ENCODE measurements at regions of chr1 and their contacts with region 1.

Region 1: DNA sequence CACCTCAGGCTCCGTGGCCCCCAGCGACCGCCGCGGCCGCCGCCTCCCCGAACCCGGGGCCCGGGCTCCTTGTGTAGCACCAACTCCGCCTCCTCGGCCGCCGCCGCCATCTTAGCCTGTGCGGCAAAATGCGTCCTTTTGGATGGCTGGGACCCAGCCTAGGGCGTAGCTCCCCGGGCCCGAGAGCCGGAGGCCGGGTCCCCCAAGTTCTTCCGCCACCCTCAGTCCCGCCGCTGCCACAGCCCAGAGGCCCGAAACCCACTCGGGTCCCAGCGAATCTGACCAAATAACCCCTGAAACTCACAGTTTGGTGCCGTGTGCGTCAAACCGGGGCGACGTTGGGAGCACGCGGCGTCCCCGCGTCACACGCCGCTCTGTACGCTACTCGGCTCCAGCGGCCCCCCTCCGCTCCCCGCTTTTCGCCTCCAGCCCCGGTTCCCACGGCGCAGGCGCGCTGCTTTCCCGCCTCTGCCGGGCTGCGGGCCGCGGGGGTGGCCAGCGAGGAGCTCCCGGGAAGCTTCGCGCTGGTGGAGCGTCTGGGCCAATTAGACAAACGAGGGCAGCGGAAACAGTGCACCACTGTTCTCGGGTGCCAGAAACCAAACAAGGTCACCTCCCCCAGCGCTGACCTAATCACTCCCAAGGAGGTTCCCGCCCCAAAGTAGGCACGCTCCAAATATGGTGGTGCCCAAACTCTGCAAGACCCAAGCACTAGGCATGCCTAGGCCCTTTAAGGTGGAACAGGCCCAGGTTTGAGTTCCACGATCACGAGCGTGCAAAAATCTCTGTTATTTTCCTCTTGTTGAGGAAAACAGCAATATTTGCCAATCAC is at the start of gene ZNF644:
- DNase-seq: peak; percentile 78 to 98
- H3K4me3 ChIP-seq: peak within 1 kb of the TSS; percentile 72 to 84
- H3K27ac ChIP-seq: peak within 1 kb of the TSS; percentile 96 to 100
- H3K4me1 ChIP-seq: peaks cover 4 to 13% of the 10 kb centered on the region in 2 donors
- H3K27me3 ChIP-seq: no peaks in the 10 kb centered on the region
- CTCF ChIP-seq: no peak
- total RNA-seq, gene ZNF644: 17.1 TPM

Region 2: DNA sequence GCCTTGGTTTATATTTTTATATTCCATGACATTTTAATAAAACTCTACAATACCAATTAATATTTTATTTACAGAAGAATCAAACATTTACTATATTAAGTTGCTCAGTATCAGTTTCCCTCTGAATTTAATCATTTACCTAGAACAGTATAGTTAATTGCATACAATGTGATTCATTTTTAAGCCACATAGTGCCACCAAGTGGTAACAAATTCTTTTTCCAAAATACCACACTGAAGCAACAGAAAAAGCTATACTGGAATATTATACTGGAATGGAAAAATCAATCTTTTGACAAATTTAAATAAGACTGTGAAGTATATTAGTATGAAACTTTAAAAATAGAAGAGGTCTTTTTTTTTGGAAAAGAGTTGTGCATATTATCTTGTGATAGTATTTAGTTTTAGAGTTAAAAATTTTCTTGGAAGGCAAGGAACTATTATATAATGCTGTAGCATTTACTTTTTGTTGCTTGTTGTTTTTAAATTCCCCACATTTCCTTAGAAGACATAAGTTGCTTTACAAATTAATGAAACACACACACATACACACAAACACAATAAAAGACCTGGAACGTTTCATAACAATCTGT is 57.4 kb before region 1 on chr1:
- intact Hi-C with region 1: loop called (anchors 2 kb)
- DNase-seq: no peak
- H3K4me3 ChIP-seq: no peak overlapping the region
- H3K27ac ChIP-seq: no peak overlapping the region
- H3K4me1 ChIP-seq: peaks cover 0 to 2% of the 10 kb centered on the region in 2 donors
- H3K27me3 ChIP-seq: no peaks in the 10 kb centered on the region
- CTCF ChIP-seq: peak in 2 of 3 experiments; percentile 8 to 35

Region 3: GRCh38 chr1:91523482-91523881 is 501.6 kb after region 1 on chr1:
- intact Hi-C with region 1: no loop called
- DNase-seq: no peak
- H3K4me3 ChIP-seq: no peak overlapping the region
- H3K27ac ChIP-seq: no peak overlapping the region
- H3K4me1 ChIP-seq: no peaks in the 10 kb centered on the region
- H3K27me3 ChIP-seq: no peaks in the 10 kb centered on the region
- CTCF ChIP-seq: no peak

Measured in ascending aorta (tissue), 2 donors.